PC-3 (cell line): ENCODE measurements at regions of chr16 and their contacts with region 1.

Region 1: DNA sequence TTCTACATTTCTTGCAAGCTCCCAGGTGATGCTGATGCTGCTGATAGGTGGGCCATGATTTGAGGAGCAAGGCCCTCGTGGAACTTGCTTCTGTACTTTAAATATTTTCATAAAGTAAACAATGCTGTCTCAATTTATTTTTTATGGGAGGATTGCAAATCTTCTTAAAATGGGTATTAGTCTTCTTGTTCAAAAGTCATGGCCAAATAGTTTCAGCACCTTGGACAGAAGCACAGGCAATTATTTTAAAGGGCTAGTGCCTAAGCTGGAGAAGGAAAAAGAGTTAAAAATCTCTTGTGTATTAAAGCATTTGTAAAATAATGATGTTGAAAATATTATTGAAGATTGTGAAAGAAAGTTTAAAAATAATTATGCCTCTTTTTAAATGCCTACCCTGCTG is 50.5 kb downstream of the GPR139 start:
- DNase-seq: peak; percentile 41
- ATAC-seq: no peak
- H3K4me3 ChIP-seq: no peak overlapping the region
- H3K27ac ChIP-seq: no peak overlapping the region
- H3K4me1 ChIP-seq: no peaks in the 10 kb centered on the region
- H3K27me3 ChIP-seq: no peaks in the 10 kb centered on the region
- CTCF ChIP-seq: no peak

Region 2: DNA sequence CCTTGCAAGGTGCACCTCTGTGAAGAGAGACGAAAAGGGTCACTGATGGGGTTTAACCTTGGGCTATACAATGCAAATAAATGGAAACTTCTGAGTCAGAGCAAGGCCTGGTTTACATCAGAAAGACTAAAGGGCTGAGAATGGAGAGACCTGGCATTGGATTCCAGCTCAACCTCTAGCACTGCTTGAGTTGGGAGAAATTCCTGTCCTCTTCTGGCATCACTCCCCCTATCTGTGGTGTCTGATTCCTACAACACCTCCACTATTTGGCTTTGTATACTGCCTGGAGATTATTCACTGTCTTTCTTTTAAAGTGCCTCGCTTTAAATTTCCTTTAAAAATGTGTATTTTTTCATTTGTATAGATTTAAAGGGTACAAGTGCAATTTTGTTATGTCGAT is 18.3 kb before region 1 on chr16:
- CTCF ChIA-PET with region 1: no interaction called
- POLR2A ChIA-PET with region 1: interaction called, 13 read pairs
- intact Hi-C with region 1: no loop called
- DNase-seq: no peak
- ATAC-seq: no peak
- H3K4me3 ChIP-seq: no peak overlapping the region
- H3K27ac ChIP-seq: no peak overlapping the region
- H3K4me1 ChIP-seq: no peaks in the 10 kb centered on the region
- H3K27me3 ChIP-seq: no peaks in the 10 kb centered on the region; the same call in 1 of the 2 replicates
- CTCF ChIP-seq: 0 out of 2 replicates have a peak, but pooled peaks have one; percentile 22

Region 3: DNA sequence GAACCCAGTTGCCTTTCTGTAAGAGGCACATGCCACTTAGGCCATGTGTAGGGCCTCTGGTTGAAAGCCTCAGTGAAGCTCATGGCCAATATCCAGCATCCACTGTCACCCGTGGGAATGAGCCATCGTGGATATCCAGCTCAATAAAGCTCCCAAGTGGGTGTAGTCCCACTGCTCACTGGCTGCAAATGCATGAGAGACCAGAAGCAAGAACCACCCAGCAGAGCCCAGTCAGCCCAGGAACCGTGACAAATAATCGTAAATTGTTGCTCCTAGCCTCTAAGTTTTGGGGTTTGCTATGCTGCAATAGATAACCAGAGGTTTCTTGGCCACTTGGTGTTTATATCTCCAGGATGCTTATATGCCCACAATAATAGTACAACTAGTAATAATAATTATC is 16.8 kb after region 1 on chr16:
- CTCF ChIA-PET with region 1: no interaction called
- POLR2A ChIA-PET with region 1: no interaction called
- intact Hi-C with region 1: no loop called
- DNase-seq: no peak
- ATAC-seq: no peak
- H3K4me3 ChIP-seq: no peak overlapping the region
- H3K27ac ChIP-seq: no peak overlapping the region
- H3K4me1 ChIP-seq: no peaks in the 10 kb centered on the region
- H3K27me3 ChIP-seq: peaks cover 15% of the 10 kb centered on the region
- CTCF ChIP-seq: no peak